HCT116 (cell line): ENCODE measurements at regions of chr9 and their contacts with region 1.

Region 1: DNA sequence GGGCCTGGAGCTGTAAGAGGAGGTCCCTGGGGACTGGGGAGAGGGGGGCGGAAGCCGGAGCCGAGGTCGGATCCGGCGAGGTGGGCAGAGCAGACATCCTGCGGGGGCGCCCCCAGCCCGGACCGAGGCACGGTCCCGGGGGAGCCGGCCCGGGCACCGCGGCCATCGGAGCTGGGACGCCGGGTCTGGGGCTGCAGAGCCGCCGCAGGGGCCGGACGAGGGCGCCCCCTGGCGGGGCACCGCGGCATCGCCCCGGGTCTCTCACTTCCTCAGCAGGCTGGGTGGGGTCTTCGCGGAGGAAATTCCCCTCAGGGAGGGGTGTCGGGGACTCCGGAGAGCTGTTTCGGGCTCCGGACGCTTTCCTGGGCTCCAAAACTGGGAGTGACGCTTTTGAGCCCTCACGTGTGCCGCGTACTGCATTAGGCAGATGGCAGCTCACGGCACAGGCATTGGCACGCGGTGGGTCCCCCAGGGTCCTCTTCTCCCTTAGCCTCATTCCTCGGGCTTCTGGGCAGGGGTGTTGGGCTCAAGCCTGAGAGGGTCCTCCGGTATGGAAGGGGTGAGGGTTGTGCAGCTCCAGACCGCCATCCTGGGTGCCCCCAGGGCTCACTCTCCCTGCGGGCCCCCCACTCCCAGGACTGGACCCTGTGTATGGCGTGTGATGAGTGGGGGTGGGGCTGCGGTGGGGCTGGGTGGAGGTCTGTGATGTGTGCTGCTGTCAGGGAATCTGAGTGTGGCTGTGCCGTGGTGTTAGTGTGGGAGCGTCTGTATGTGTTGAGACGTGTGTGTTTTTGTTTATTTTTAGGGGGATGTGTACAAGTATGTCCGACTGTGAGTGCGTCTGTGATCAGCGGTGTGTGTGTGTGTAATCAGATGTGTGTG is 29.6 kb downstream of the LHX2 start:
- DNase-seq: no peak
- ATAC-seq: peak; percentile 80
- H3K4me3 ChIP-seq: peak overlapping the region; percentile 23 to 30; a peak in 3 of 4 replicates
- H3K27ac ChIP-seq: no peak overlapping the region
- H3K4me1 ChIP-seq: peaks cover 3 to 16% of the 10 kb centered on the region in 2 experiments; a peak in 2 of 4 replicates
- H3K27me3 ChIP-seq: no peaks in the 10 kb centered on the region
- CTCF ChIP-seq: peak; percentile 48 to 93 (median 92); a peak in 5 of 6 replicates
- POLR2A ChIP-seq: no peak
- RAD21 ChIP-seq: peak; percentile 86

Region 2: DNA sequence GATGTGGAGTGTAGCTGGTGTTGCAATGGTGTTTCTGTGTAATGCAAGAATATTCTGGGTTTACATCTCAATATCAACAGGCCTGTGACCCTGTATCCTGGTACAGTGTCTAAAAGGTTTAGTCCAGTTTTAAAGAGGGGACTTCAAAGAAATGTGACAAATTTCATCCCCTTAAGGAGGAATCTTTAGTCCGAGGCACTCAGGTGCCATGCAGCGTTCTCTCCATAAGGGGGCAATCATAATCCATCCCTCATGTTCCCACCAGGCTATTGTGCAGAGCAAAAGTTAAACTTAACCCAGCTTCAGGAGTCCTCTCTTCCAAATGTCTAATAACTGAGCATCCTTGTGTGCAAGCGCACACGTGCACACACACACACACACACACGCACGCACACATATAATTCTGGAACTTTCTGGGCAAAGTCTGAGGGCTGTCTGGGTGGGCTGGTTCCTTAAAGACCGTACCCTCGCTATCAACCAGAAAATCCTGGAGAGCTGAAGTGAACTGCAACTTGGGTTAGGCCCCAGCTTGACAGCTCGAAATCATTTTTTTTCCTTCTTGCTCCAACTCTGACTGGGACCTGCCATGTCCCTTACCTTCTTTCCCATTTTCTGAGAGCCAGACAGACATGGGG is 639.2 kb before region 1 on chr9:
- CTCF ChIA-PET with region 1: interaction called, 9 read pairs
- POLR2A ChIA-PET with region 1: no interaction called
- RAD21 ChIA-PET with region 1: no interaction called
- intact Hi-C with region 1: loop called (anchors 1 kb)
- DNase-seq: peak; percentile 23
- ATAC-seq: peak; percentile 86
- H3K4me3 ChIP-seq: no peak overlapping the region
- H3K27ac ChIP-seq: no peak overlapping the region
- H3K4me1 ChIP-seq: no peaks in the 10 kb centered on the region
- H3K27me3 ChIP-seq: no peaks in the 10 kb centered on the region
- CTCF ChIP-seq: peak; percentile 63 to 83 (median 82); a peak in 5 of 6 replicates
- POLR2A ChIP-seq: no peak
- RAD21 ChIP-seq: peak; percentile 82

Region 3: GRCh38 chr9:123544007-123544827 is 497.0 kb before region 1 on chr9:
- CTCF ChIA-PET with region 1: interaction called, 44 read pairs
- POLR2A ChIA-PET with region 1: no interaction called
- RAD21 ChIA-PET with region 1: interaction called in 1 of 2 experiments, 3 read pairs
- intact Hi-C with region 1: loop called (anchors 1 kb)
- DNase-seq: peak; percentile 12
- ATAC-seq: peak; percentile 63; the same call in 1 of the 2 replicates
- H3K4me3 ChIP-seq: no peak overlapping the region
- H3K27ac ChIP-seq: no peak overlapping the region
- H3K4me1 ChIP-seq: no peaks in the 10 kb centered on the region
- H3K27me3 ChIP-seq: no peaks in the 10 kb centered on the region
- CTCF ChIP-seq: peak; percentile 81 to 83 (median 83)
- POLR2A ChIP-seq: no peak
- RAD21 ChIP-seq: peak; percentile 94

Region 4: GRCh38 chr9:123724211-123724796 is 316.9 kb before region 1 on chr9:
- CTCF ChIA-PET with region 1: interaction called, 11 read pairs
- POLR2A ChIA-PET with region 1: no interaction called
- RAD21 ChIA-PET with region 1: no interaction called
- intact Hi-C with region 1: no loop called
- DNase-seq: no peak
- ATAC-seq: no peak
- H3K4me3 ChIP-seq: no peak overlapping the region
- H3K27ac ChIP-seq: no peak overlapping the region
- H3K4me1 ChIP-seq: no peaks in the 10 kb centered on the region
- H3K27me3 ChIP-seq: no peaks in the 10 kb centered on the region
- CTCF ChIP-seq: 0 out of 6 replicates have a peak, but pooled peaks of 2 of the 3 experiments have one; percentile 8 to 18
- POLR2A ChIP-seq: no peak
- RAD21 ChIP-seq: peak; percentile 48; the same call in 1 of the 2 replicates